AG04449 (cell line): ENCODE measurements at regions of chr6 and their contacts with region 1.

Region 1: GRCh38 chr6:56955171-56956045 is 501 bp downstream of the BEND6 start:
- DNase-seq: no peak
- H3K4me3 ChIP-seq: peak overlapping the region; percentile 88
- CTCF ChIP-seq: peak; percentile 95

Region 2: DNA sequence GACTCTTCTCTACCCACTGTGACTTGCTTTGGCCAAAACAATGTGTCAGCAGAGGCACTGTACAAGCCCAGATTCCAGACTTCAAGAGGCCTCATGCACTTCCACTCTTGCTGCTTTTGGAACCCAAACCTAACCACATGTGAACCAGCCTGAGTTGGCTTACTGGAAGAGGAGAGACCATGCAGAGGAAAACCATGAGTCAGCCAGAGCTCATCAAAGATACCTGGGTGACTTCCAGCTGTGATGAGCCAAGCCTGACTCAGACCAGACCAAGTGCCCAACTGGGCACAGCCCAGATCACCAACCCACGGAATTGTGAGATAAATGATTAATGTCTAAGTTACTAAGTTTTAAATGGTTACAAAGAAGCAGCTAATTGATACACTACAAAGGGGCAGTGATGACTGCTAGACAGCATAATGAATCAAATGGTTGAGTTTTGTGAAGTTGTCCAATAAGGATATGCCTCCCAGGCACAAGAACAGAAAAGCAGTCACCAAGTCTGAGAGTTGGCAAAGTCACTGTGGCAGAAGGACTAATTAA is 16.7 kb before region 1 on chr6:
- CTCF ChIA-PET with region 1: interaction called, 10 read pairs
- POLR2A ChIA-PET with region 1: interaction called, 4 read pairs
- DNase-seq: peak; percentile 97
- H3K4me3 ChIP-seq: no peak overlapping the region
- CTCF ChIP-seq: no peak

Region 3: DNA sequence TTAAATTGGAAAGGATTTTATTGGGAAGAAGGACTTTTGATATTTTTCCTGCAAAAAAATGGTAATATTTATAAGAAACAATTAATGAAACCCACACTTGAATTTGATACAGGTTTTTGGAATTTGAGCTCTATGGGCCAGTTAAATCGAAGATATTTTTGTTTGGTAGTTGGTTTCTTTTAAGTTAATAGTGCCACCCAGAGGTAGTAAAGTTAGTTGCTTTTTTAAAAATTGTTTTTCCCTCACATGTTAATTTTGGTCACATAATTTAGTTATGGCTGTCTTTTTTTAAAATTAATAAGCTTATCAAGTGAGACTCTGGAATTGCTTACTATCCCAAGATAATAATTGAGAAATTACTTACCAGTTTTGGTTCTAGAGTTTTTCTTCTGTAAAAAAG is 369.1 kb after region 1 on chr6:
- CTCF ChIA-PET with region 1: interaction called, 11 read pairs
- POLR2A ChIA-PET with region 1: no interaction called
- DNase-seq: no peak
- H3K4me3 ChIP-seq: no peak overlapping the region
- CTCF ChIP-seq: no peak